CD4-positive, alpha-beta T cell (primary cell): ENCODE measurements at regions of chr9 and their contacts with region 1.

Region 1: DNA sequence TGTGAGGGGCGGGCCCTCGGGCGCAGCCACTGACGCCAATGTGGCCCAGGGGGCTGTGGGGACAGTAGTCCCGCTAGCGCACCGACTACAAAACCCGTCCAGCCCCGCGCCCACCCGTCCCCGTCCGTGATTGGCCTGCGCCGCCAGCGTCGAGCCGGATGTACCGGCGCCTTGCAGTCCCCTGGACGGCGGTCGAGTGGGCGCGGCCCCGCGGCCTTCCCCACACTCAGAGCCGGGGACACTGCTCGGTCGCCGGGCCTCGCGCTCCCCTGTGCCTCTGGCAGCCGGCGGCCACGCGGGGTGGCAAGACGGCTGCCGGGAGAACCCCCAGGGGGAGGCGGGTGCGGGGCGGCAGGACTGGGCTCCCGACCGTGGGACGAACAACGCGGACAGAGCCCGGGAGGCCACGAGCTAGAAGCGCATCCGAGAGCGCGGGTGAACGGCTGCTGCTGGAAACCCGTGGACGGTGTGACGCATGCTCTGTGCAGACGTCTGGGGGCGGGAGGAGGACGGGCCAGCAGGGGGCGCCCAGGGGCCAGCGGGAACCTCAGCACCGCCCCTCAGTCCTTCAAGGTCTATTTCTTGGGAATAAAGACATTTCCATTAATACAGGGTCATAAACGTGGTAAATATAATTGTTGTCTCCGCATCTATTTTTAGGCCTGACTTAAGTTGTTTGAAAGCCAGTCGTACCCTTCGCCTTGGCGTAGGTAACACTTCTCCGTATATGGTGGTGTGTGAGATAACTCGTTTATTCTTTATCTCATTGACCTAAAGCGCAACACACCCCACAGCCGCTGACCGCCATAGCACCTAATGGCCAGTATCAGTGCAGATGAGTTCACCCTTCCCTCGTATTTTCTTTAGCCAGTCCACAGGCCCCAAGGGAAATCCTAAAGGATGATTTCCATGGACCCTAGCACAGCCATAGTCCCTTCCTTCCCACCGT is 629 bp upstream of the BICD2 start:
- DNase-seq: peak; percentile 88 to 99 (median 97)
- ATAC-seq: peak; percentile 89
- H3K4me3 ChIP-seq: peak overlapping the region; percentile 95
- H3K4me3 Mint-ChIP-seq: peak overlapping the region; percentile 95
- H3K27ac ChIP-seq: peak overlapping the region; percentile 97
- H3K27ac Mint-ChIP-seq: peak overlapping the region; percentile 100
- H3K4me1 ChIP-seq: peaks cover 51% of the 10 kb centered on the region
- H3K4me1 Mint-ChIP-seq: peaks cover 62% of the 10 kb centered on the region
- H3K27me3 ChIP-seq: no peaks in the 10 kb centered on the region
- H3K27me3 Mint-ChIP-seq: no peaks in the 10 kb centered on the region
- CTCF ChIP-seq: peak; percentile 97

Region 2: DNA sequence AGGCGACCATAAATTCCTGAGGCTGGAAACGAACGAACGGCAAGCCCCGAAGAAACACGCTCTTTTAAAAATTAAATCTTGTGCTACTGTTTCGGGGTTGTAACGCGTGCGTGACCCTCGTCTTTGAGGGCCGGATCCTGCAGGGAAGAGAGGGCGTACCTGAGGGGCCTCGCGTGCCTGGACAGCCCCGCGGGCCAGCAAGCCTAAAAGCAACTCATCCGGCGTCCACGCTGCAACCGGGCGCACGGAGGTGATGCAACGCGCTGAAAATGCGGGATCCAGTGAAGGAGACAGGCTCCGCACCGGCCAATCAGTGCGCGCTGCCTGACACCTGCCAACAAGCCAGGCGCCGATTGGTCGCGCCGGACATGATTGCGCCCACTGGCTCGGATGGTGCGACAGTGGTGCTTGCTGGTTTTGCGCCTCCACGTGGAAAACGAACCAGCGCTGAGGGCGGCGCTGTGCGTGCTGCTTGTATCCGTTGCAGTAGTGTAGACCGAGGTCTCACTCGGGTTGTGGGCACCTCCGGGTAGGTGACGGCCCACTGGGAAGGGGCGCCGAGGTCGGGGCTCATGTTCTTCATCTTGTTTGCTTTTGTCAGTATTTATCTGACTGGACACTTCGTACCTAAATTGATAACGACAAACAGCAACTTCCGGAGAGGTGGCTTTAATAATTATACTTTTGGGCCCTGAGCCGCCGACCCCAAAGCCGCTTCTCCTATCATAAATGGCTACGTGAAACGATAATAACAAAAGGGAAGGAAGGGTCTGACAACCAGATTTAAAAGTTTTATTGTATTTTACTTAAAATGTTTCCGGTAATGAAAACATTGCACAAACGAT is 471.6 kb before region 1 on chr9 and contains the start of gene IARS1:
- CTCF ChIA-PET with region 1: no interaction called
- POLR2A ChIA-PET with region 1: no interaction called
- intact Hi-C with region 1: loop called in 1 of 2 experiments (anchors 10 kb)
- DNase-seq: peak; percentile 97 to 100 (median 99)
- ATAC-seq: peak; percentile 93
- H3K4me3 ChIP-seq: peak within 1 kb of the TSS; percentile 70
- H3K4me3 Mint-ChIP-seq: peak within 1 kb of the TSS; percentile 98
- H3K27ac ChIP-seq: peak within 1 kb of the TSS; percentile 73 to 74
- H3K27ac Mint-ChIP-seq: peak within 1 kb of the TSS; percentile 97
- H3K4me1 ChIP-seq: peaks cover 25% of the 10 kb centered on the region
- H3K4me1 Mint-ChIP-seq: peaks cover 69% of the 10 kb centered on the region
- H3K27me3 ChIP-seq: no peaks in the 10 kb centered on the region
- H3K27me3 Mint-ChIP-seq: no peaks in the 10 kb centered on the region
- CTCF ChIP-seq: no peak
- total RNA-seq, gene IARS1: 49.8 to 56.8 TPM

Region 3: GRCh38 chr9:92618628-92619225 is 146.5 kb before region 1 on chr9:
- CTCF ChIA-PET with region 1: no interaction called
- POLR2A ChIA-PET with region 1: no interaction called
- intact Hi-C with region 1: no loop called
- DNase-seq: no peak
- ATAC-seq: no peak
- H3K4me3 ChIP-seq: no peak overlapping the region
- H3K4me3 Mint-ChIP-seq: no peak overlapping the region
- H3K27ac ChIP-seq: no peak overlapping the region
- H3K27ac Mint-ChIP-seq: no peak overlapping the region
- H3K4me1 ChIP-seq: no peaks in the 10 kb centered on the region
- H3K4me1 Mint-ChIP-seq: no peaks in the 10 kb centered on the region
- H3K27me3 ChIP-seq: no peaks in the 10 kb centered on the region
- H3K27me3 Mint-ChIP-seq: no peaks in the 10 kb centered on the region
- CTCF ChIP-seq: no peak

Region 4: GRCh38 chr9:92669890-92670708 is 95.2 kb before region 1 on chr9 and contains the start of gene IPPK:
- CTCF ChIA-PET with region 1: interaction called, 7 read pairs
- POLR2A ChIA-PET with region 1: interaction called, 34 read pairs
- intact Hi-C with region 1: loop called in 1 of 2 experiments (anchors 1 kb)
- DNase-seq: peak; percentile 92 to 99 (median 95)
- ATAC-seq: peak; percentile 94
- H3K4me3 ChIP-seq: peak within 1 kb of the TSS; percentile 100
- H3K4me3 Mint-ChIP-seq: peak within 1 kb of the TSS; percentile 98
- H3K27ac ChIP-seq: peak within 1 kb of the TSS; percentile 88 to 96
- H3K27ac Mint-ChIP-seq: peak within 1 kb of the TSS; percentile 99
- H3K4me1 ChIP-seq: peaks cover 37% of the 10 kb centered on the region
- H3K4me1 Mint-ChIP-seq: peaks cover 45% of the 10 kb centered on the region
- H3K27me3 ChIP-seq: no peaks in the 10 kb centered on the region
- H3K27me3 Mint-ChIP-seq: no peaks in the 10 kb centered on the region
- CTCF ChIP-seq: no peak
- total RNA-seq, gene IPPK: 4.0 to 4.4 TPM

Region 5: DNA sequence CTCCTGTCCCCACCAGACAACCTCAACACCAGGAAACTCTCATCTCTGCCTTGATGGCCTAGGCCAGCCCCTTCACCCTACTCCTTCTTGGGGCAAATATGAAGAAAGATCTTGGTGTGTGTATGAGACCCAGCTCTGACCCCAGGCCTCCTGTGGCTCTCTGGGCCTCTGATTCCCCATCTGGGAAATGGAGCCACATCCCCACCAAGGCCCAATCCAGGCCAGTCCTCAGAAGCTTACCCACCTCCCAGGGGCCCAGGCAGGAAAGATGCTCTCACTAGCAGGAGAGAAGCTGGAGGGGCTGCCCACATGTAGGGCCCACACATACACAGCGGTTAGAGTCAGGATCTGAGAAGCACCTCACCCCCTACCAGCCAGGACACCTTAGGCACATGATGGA is 39.5 kb before region 1 on chr9:
- CTCF ChIA-PET with region 1: no interaction called
- POLR2A ChIA-PET with region 1: no interaction called
- intact Hi-C with region 1: no loop called
- DNase-seq: no peak
- ATAC-seq: no peak
- H3K4me3 ChIP-seq: no peak overlapping the region
- H3K4me3 Mint-ChIP-seq: no peak overlapping the region
- H3K27ac ChIP-seq: no peak overlapping the region
- H3K27ac Mint-ChIP-seq: peak overlapping the region; percentile 24
- H3K4me1 ChIP-seq: no peaks in the 10 kb centered on the region
- H3K4me1 Mint-ChIP-seq: peaks cover 10% of the 10 kb centered on the region
- H3K27me3 ChIP-seq: no peaks in the 10 kb centered on the region
- H3K27me3 Mint-ChIP-seq: no peaks in the 10 kb centered on the region
- CTCF ChIP-seq: no peak

Region 6: DNA sequence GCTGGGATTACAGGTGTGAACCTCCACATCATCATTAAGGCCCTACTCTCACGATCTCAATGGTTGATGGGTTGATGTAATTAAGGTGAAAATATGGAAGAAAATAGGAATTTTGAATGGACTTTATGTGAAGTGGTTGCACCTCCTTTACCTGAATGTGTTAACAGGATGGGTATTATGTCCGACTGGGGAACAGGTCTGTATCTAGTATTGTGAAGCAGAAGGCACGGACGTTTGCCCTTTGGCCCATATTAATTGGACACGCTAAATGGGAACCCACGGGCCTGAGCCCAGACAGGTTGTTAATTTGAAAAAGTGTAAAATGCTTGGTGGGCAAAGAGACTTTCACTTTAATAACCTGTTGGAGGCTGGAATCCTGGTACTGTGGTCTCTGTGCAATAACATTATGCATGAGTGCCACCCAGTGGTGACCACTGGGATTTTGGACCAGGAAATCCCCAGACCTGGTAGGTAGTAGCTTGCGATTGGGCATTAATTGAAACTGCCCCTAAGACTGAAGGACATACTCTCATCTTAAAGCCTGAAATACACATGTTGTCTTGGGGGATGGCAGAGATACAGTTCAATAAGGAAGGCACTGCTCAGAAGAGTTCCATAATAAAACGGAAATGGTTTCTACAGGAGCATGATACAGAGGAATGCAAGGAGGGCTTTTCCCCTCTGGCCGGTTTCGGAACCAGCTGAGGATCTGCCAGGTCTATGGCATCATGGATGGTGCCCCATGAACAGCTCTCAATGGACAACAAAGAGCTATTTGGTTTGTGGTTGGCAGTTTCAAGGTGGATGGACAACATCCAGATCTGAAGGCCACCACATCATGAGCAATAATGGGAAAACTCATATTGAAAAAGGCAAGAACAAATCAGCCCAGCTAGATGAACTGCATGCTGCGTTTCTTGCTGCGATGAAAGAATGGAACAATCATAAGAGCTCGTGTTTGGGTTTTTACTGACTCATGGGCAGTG is 25.6 kb after region 1 on chr9:
- CTCF ChIA-PET with region 1: interaction called, 10 read pairs
- POLR2A ChIA-PET with region 1: interaction called, 8 read pairs
- intact Hi-C with region 1: loop called (anchors 1 kb)
- DNase-seq: peak; percentile 61 to 87 (median 74)
- ATAC-seq: peak; percentile 97
- H3K4me3 ChIP-seq: no peak overlapping the region
- H3K4me3 Mint-ChIP-seq: no peak overlapping the region
- H3K27ac ChIP-seq: no peak overlapping the region
- H3K27ac Mint-ChIP-seq: no peak overlapping the region
- H3K4me1 ChIP-seq: peaks cover 5% of the 10 kb centered on the region
- H3K4me1 Mint-ChIP-seq: peaks cover 6% of the 10 kb centered on the region
- H3K27me3 ChIP-seq: no peaks in the 10 kb centered on the region
- H3K27me3 Mint-ChIP-seq: peaks cover 11% of the 10 kb centered on the region
- CTCF ChIP-seq: peak; percentile 91

Region 7: GRCh38 chr9:93095205-93096130 is 330.2 kb after region 1 on chr9:
- CTCF ChIA-PET with region 1: no interaction called
- POLR2A ChIA-PET with region 1: no interaction called
- intact Hi-C with region 1: loop called in 1 of 2 experiments (anchors 5 kb)
- DNase-seq: peak; percentile 100
- ATAC-seq: peak; percentile 81
- H3K4me3 ChIP-seq: peak overlapping the region; percentile 62
- H3K4me3 Mint-ChIP-seq: peak overlapping the region; percentile 95
- H3K27ac ChIP-seq: peak overlapping the region; percentile 94 to 95
- H3K27ac Mint-ChIP-seq: peak overlapping the region; percentile 99
- H3K4me1 ChIP-seq: peaks cover 75% of the 10 kb centered on the region
- H3K4me1 Mint-ChIP-seq: peaks cover 78% of the 10 kb centered on the region
- H3K27me3 ChIP-seq: no peaks in the 10 kb centered on the region
- H3K27me3 Mint-ChIP-seq: no peaks in the 10 kb centered on the region
- CTCF ChIP-seq: no peak

Region 8: GRCh38 chr9:93575796-93576257 is 810.6 kb after region 1 on chr9:
- CTCF ChIA-PET with region 1: no interaction called
- POLR2A ChIA-PET with region 1: no interaction called
- intact Hi-C with region 1: loop called in 1 of 2 experiments (anchors 5 kb)
- DNase-seq: peak in 13 of 14 experiments; percentile 25 to 72 (median 45)
- ATAC-seq: peak; percentile 44
- H3K4me3 ChIP-seq: peak overlapping the region; percentile 75
- H3K4me3 Mint-ChIP-seq: peak overlapping the region; percentile 95
- H3K27ac ChIP-seq: peak overlapping the region; percentile 51 to 56
- H3K27ac Mint-ChIP-seq: peak overlapping the region; percentile 95
- H3K4me1 ChIP-seq: peaks cover 33% of the 10 kb centered on the region
- H3K4me1 Mint-ChIP-seq: peaks cover 51% of the 10 kb centered on the region
- H3K27me3 ChIP-seq: no peaks in the 10 kb centered on the region
- H3K27me3 Mint-ChIP-seq: no peaks in the 10 kb centered on the region
- CTCF ChIP-seq: no peak

Region 9: DNA sequence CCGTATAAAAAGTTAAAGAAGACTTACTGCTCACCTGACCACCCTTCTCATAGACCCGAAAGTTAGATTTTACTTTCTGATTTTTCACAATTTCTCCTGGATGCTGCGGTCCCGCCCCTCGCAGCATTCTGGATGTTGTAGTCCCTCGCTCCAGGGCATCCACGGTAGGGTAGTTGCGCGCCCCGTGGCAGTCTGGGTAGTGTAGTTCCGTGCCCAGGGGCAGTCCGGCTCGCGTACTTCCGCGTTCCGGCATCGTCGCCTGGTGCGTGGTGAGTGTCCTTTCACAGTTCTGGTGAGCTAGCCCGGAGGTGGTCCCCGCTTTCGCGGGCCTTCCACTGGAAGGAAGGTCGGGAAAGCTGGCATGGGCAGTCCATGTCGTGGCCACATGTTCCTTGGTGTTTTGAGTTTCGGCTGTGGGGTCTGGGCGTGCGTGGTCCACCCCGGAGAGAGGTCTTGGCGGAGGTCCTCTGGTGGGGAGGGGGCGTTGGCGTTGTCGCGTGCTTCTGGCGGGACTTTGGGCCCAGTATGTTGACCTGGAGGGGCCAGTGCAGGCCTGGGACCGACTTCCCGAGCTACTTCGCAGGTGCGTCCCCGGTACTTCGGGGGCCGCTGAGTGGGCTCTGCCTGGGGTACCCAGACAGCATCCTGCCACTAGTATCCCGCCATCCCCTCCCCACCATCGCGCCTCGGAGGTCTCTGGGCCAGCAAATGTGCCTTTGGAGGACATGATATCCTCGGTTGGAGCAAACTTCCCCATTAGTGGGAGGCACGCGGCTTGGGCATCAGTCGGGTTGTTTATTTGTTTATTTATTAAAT is 1494.0 kb after region 1 on chr9 and contains the start of gene ZNF169:
- CTCF ChIA-PET with region 1: no interaction called
- POLR2A ChIA-PET with region 1: no interaction called
- intact Hi-C with region 1: loop called in 1 of 2 experiments (anchors 2 kb)
- DNase-seq: peak; percentile 74 to 91 (median 82)
- ATAC-seq: peak; percentile 100
- H3K4me3 ChIP-seq: peak within 1 kb of the TSS; percentile 98
- H3K4me3 Mint-ChIP-seq: peak within 1 kb of the TSS; percentile 98
- H3K27ac ChIP-seq: peak within 1 kb of the TSS; percentile 35 to 38
- H3K27ac Mint-ChIP-seq: peak within 1 kb of the TSS; percentile 88
- H3K4me1 ChIP-seq: peaks cover 21% of the 10 kb centered on the region
- H3K4me1 Mint-ChIP-seq: peaks cover 46% of the 10 kb centered on the region
- H3K27me3 ChIP-seq: peaks cover 0 to 6% of the 10 kb centered on the region in 2 experiments
- H3K27me3 Mint-ChIP-seq: peaks cover 5% of the 10 kb centered on the region
- CTCF ChIP-seq: no peak
- total RNA-seq, gene ZNF169: 3.5 to 5.1 TPM